Activated naive CD4-positive, alpha-beta T cell treated with anti-CD3 and anti-CD28 coated beads for 36 hours (primary cell): ENCODE measurements at regions of chr7 and their contacts with region 1.

Region 1: GRCh38 chr7:50266635-50267386 is 37.7 kb upstream of the IKZF1 start:
- DNase-seq: peak; percentile 84
- H3K4me3 Mint-ChIP-seq: peak overlapping the region; percentile 55
- H3K27ac Mint-ChIP-seq: peak overlapping the region; percentile 94
- H3K4me1 Mint-ChIP-seq: peaks cover 91% of the 10 kb centered on the region
- H3K27me3 Mint-ChIP-seq: no peaks in the 10 kb centered on the region

Region 2: DNA sequence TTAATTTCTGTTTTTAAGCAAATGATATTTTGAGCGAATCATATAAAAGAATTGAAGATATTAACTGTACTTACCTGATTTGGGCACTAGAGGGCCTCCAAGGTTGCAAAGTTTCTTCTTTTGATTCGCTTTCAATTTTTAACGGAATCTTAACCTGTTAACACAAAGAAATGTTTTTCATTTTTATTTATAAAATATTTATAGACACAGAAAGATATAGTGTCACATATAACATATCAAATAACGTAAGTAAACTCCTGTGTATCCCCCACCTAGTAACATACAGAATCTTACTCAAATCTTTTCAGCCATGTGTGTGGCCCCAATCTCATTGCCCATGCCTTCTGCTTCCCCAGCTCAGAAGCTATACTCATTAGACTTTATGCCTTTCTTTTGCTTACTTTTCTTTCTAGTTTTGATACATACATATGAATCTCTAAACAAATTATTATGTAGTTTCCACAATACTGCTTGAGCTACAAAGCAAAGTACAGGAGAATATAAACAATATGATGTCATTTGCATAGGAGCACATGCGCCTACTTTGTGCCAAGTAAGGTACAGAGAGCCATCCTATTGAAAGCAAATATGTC is 124.3 kb before region 1 on chr7:
- CTCF ChIA-PET with region 1: interaction called, 4 read pairs
- intact Hi-C with region 1: loop called (anchors 1 kb)
- DNase-seq: peak; percentile 64
- H3K4me3 Mint-ChIP-seq: peak overlapping the region; percentile 45
- H3K27ac Mint-ChIP-seq: peak overlapping the region; percentile 82
- H3K4me1 Mint-ChIP-seq: peaks cover 43% of the 10 kb centered on the region
- H3K27me3 Mint-ChIP-seq: no peaks in the 10 kb centered on the region

Region 3: GRCh38 chr7:50227726-50228125 is 39.1 kb before region 1 on chr7:
- CTCF ChIA-PET with region 1: interaction called, 31 read pairs
- intact Hi-C with region 1: loop called (anchors 1 kb)
- DNase-seq: no peak
- H3K4me3 Mint-ChIP-seq: peak overlapping the region; percentile 64
- H3K27ac Mint-ChIP-seq: peak overlapping the region; percentile 81
- H3K4me1 Mint-ChIP-seq: peaks cover 37% of the 10 kb centered on the region
- H3K27me3 Mint-ChIP-seq: no peaks in the 10 kb centered on the region

Region 4: GRCh38 chr7:50281680-50282445 is 15.1 kb after region 1 on chr7:
- CTCF ChIA-PET with region 1: interaction called, 23 read pairs
- intact Hi-C with region 1: loop called (anchors 1 kb)
- DNase-seq: peak; percentile 29
- H3K4me3 Mint-ChIP-seq: peak overlapping the region; percentile 59
- H3K27ac Mint-ChIP-seq: peak overlapping the region; percentile 75
- H3K4me1 Mint-ChIP-seq: peaks cover 79% of the 10 kb centered on the region
- H3K27me3 Mint-ChIP-seq: no peaks in the 10 kb centered on the region

Region 5: GRCh38 chr7:50317221-50317678 is 50.4 kb after region 1 on chr7:
- CTCF ChIA-PET with region 1: interaction called, 7 read pairs
- intact Hi-C with region 1: loop called (anchors 1 kb)
- DNase-seq: peak; percentile 77
- H3K4me3 Mint-ChIP-seq: peak overlapping the region; percentile 71
- H3K27ac Mint-ChIP-seq: peak overlapping the region; percentile 99
- H3K4me1 Mint-ChIP-seq: peaks cover 90% of the 10 kb centered on the region
- H3K27me3 Mint-ChIP-seq: no peaks in the 10 kb centered on the region

Region 6: DNA sequence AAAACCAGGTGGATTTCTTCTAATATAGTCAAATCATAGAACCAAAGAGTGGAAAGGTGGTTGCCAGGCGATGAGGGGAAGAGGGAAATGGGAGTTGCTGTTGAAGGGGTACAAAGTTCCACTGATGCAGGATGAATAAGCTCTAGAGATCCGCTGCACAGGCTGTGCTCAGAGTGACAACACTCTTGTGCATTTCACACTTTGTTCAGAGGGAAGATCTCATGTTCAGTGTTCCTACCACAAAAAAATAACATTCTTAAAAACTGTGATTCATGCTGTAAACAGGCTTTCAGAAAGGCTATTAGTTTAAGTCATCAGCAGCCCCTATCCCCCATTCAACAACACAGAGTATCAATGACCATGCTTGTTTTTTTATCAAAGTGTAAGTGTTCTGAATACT is 836.0 kb after region 1 on chr7:
- CTCF ChIA-PET with region 1: no interaction called
- intact Hi-C with region 1: no loop called
- DNase-seq: no peak
- H3K4me3 Mint-ChIP-seq: no peak overlapping the region
- H3K27ac Mint-ChIP-seq: no peak overlapping the region
- H3K4me1 Mint-ChIP-seq: no peaks in the 10 kb centered on the region
- H3K27me3 Mint-ChIP-seq: no peaks in the 10 kb centered on the region